ENCODE measurements at regions of chr16 and their contacts with region 1.

Region 1: DNA sequence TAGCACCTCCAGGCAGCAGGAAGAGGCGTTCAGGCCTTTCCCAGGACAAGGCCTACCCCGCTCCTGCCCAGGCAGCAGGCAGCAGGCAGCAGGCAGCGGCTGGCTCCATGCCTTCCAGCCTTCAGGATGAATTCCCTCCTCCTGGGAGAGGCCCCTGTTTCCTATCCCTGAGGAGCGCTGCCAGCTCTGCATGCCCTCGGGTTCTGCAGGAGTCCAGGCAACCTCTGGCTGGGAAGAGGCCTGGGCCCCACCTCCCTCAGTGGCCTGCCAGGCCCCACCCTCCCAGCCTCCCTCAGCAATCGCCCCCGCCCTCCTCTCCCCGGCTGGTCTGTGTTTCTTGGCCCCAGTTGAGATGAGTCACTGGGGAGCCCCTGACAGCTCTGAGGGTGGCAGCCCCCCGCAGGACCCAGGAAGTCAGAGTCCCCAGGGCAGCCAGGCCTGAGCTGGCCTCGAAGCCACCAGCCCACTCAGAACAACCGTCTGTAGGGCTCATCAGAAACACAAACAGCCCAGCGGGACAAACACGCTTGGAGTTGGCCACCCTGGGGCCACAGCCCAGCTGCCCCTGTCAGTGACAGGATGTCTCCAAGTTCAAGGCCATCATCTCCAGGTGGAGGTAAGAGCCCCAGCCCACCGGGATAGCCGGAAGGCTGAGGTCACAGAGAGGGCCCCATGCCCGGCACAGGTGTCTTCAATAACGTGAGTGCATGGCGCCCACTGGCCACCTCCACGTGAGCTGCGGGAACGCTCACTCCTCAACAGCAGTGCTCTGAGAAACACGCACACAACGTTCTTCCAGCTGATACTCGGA is 39.5 kb upstream of the CIBAR2 start:
- DNase-seq: peak; percentile 87
- ATAC-seq: peak; percentile 84 to 90

Region 2: DNA sequence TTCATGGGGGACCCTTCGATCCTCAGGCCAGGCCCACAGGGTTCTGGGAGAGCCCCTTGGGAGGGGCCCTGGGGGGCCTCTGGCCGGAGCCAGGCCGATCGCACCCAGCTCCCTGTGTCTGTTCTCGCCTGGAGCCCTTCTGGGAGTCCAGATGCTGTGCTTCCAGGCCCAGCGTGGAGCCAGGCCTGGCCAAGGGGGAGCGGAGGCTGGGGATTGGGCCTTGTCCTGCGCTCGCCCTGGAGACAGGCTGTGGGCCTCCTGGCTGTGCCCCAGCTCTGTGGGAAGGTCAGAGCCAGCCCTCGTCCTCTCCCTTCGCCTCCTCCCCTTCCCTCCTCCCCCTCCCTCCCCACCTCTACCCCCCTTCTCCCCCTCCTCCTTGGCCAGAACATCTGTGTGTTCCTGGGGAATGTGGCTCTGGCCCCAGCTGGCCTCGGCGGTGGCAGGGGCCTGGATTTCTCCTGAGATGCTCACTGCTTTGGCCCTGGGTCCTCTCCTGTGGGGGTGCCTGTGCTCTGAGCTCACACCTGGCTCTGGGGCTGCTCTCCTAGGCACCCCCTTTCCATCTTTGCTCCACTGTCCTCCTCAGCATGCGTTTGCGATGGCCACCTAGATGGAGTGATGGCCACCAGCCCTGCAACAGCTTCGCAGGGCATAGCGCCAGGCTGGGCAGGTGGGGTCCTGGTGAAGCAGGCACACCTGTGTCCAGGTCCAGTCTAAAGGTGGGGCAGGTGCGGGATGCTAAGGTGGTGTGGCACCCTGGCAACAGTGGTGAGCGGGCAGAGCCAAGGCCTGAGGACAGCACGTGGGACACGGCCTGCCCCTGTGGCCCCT is 51.0 kb after region 1 on chr16:
- intact Hi-C with region 1: loop called in 1 of 2 experiments (anchors 5 kb)
- DNase-seq: peak; percentile 85
- ATAC-seq: peak; percentile 83 to 86

Region 3: GRCh38 chr16:85227084-85227945 is 75.5 kb after region 1 on chr16:
- intact Hi-C with region 1: no loop called
- DNase-seq: no peak
- ATAC-seq: no peak

Measured in left cardiac atrium (tissue), 4 donors.